H1 (cell line): ENCODE measurements at regions of chr19 and their contacts with region 1.

Region 1: DNA sequence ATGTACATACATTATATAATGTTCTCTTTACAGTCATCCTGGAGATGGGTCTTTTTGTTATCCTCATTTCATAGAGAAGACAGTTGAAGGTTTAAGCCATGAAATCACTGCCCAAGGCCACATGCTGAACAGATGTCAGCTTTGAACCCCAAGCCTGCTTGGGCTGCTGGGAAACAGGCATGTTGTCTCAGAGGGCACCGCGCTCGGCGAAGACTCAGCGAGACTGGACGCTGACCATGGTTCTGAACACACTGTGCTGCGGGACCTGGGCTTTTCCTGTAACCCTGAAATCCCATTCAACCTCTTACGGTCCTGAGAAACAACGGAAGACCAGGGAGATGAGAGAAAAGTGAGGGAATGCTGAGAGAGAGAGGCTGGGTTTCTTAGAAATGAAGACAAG is 27.3 kb downstream of the LRFN3 start:
- DNase-seq: peak in 1 of 2 experiments; percentile 88
- H3K4me3 ChIP-seq: no peak overlapping the region
- H3K27ac ChIP-seq: no peak overlapping the region
- H3K4me1 ChIP-seq: peaks cover 0 to 7% (median 3%) of the 10 kb centered on the region in 4 experiments; a peak in 4 of 7 replicates
- H3K27me3 ChIP-seq: peaks cover 13 to 27% (median 23%) of the 10 kb centered on the region in 4 experiments
- CTCF ChIP-seq: no peak
- EP300 ChIP-seq: no peak
- POLR2A ChIP-seq: no peak
- RAD21 ChIP-seq: no peak; a peak in 1 of 4 replicates

Region 2: GRCh38 chr19:35911790-35912189 is 51.7 kb before region 1 on chr19:
- CTCF ChIA-PET with region 1: no interaction called
- POLR2A ChIA-PET with region 1: no interaction called
- DNase-seq: no peak
- H3K4me3 ChIP-seq: no peak overlapping the region
- H3K27ac ChIP-seq: no peak overlapping the region
- H3K4me1 ChIP-seq: peaks cover 0 to 17% (median 7%) of the 10 kb centered on the region in 4 experiments; a peak in 4 of 7 replicates
- H3K27me3 ChIP-seq: no peaks in the 10 kb centered on the region
- CTCF ChIP-seq: no peak
- EP300 ChIP-seq: no peak
- POLR2A ChIP-seq: no peak
- RAD21 ChIP-seq: no peak

Region 3: DNA sequence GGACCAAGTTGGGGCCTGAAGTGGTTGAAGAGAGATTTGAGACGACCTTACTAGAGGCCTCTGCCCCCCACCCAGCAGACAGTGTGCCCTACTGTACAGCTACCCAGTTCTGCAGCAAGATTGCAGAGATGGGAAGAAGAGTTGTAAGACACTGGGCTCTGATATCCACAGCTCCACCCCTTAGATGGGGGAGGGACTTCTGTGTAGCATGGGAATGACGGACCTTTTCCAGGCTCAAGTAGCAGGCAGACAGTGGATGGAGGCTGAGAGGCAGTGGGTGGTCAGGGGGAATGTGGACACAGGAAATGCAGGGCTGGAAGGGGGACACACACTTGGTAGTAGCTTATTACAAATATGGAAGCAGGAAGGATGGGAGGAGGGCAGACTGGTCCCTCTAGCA is 14.4 kb before region 1 on chr19:
- CTCF ChIA-PET with region 1: interaction called, 11 read pairs
- POLR2A ChIA-PET with region 1: interaction called, 3 read pairs
- DNase-seq: no peak
- H3K4me3 ChIP-seq: no peak overlapping the region
- H3K27ac ChIP-seq: no peak overlapping the region
- H3K4me1 ChIP-seq: peaks cover 0 to 3% (median 1%) of the 10 kb centered on the region in 4 experiments; a peak in 2 of 7 replicates
- H3K27me3 ChIP-seq: 0 out of 7 replicates have a peak, but pooled peaks cover 0 to 3% (median 0%) of the 10 kb centered on the region in 4 experiments
- CTCF ChIP-seq: no peak
- EP300 ChIP-seq: no peak
- POLR2A ChIP-seq: no peak
- RAD21 ChIP-seq: no peak

Region 4: GRCh38 chr19:35977446-35978222 is 14.1 kb after region 1 on chr19:
- CTCF ChIA-PET with region 1: interaction called, 47 read pairs
- POLR2A ChIA-PET with region 1: interaction called, 4 read pairs
- DNase-seq: peak in 1 of 2 experiments; percentile 86
- H3K4me3 ChIP-seq: no peak overlapping the region
- H3K27ac ChIP-seq: no peak overlapping the region
- H3K4me1 ChIP-seq: peaks cover 0 to 6% (median 1%) of the 10 kb centered on the region in 4 experiments; a peak in 6 of 7 replicates
- H3K27me3 ChIP-seq: peaks cover 0 to 2% (median 0%) of the 10 kb centered on the region in 4 experiments; a peak in 1 of 7 replicates
- CTCF ChIP-seq: peak; percentile 86 to 98 (median 93)
- EP300 ChIP-seq: 0 out of 3 replicates have a peak, but pooled peaks of 1 of the 2 experiments have one; percentile 31
- POLR2A ChIP-seq: no peak
- RAD21 ChIP-seq: peak; percentile 65 to 79